ENCODE measurements at regions of chr4 and their contacts with region 1.

Region 1: DNA sequence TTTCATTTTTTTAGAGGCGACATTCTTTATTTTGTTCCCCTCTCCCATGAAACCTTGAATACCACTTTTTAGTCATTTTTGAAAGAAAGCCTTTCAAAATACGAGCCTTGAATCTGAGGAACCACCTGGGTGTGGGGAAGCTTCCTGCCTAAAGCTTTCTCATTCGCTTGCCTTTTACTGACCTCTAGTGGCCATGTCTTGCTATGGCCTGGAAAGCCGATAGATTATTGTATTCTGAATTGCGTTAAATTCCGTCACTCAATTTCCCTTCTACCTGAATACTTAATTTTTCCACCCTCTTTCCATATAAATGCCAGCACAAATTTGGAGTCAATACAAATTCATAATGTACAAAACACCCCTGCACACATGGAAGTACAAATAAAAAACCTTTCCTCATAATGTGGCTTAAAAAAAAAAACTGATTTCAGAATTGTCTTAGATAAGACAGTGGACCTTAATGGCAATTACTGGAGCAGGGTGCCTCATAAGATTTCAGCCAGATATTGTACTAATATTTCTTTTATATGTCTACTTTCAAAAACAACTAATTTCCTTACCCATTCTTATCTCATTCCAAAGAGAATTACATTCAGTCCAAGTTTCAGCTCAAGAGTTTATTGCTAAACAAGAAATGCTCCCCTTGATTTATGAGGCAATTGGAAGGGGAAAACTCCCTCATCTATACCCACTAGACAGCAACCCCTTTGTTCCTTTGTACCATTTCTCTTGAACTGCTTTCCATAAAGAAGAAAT is 217.9 kb downstream of the CENPC start:
- DNase-seq: peak; percentile 44
- H3K4me3 Mint-ChIP-seq: no peak overlapping the region
- H3K27ac Mint-ChIP-seq: no peak overlapping the region
- H3K4me1 Mint-ChIP-seq: no peaks in the 10 kb centered on the region
- H3K27me3 Mint-ChIP-seq: peaks cover 7% of the 10 kb centered on the region

Region 2: GRCh38 chr4:66804979-66805378 is 522.5 kb before region 1 on chr4:
- CTCF ChIA-PET with region 1: no interaction called
- POLR2A ChIA-PET with region 1: no interaction called
- DNase-seq: no peak
- H3K4me3 Mint-ChIP-seq: no peak overlapping the region
- H3K27ac Mint-ChIP-seq: no peak overlapping the region
- H3K4me1 Mint-ChIP-seq: no peaks in the 10 kb centered on the region
- H3K27me3 Mint-ChIP-seq: no peaks in the 10 kb centered on the region

Region 3: DNA sequence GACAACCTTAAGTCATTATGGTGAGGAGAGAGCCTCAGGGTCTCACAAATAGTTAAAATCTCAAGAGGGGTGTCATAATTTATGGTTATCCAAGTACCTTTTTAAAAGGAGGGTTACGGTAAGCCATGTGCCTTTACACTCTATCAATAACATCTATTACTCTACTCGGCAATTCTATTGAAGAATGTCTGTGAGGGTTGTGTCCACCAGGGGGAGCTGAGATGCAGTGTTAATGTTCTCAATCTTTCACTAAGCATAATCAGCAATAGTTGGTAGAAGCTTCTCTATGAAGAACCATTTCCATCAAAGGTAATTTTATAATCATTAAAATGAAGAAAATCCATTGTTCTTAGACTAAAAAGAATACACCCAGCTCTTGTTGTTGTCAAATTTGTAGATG is 239.5 kb before region 1 on chr4:
- CTCF ChIA-PET with region 1: interaction called, 23 read pairs
- POLR2A ChIA-PET with region 1: no interaction called
- DNase-seq: peak; percentile 45
- H3K4me3 Mint-ChIP-seq: no peak overlapping the region
- H3K27ac Mint-ChIP-seq: no peak overlapping the region
- H3K4me1 Mint-ChIP-seq: no peaks in the 10 kb centered on the region
- H3K27me3 Mint-ChIP-seq: no peaks in the 10 kb centered on the region

Measured in activated CD4-positive, alpha-beta memory T cell treated with anti-CD3 and anti-CD28 coated beads, Interleukin-2, amount 10 ng/mL, durations not matched to agents 7 days and 5 days (primary cell).